ENCODE measurements at regions of chr19 and their contacts with region 1.

Region 1: DNA sequence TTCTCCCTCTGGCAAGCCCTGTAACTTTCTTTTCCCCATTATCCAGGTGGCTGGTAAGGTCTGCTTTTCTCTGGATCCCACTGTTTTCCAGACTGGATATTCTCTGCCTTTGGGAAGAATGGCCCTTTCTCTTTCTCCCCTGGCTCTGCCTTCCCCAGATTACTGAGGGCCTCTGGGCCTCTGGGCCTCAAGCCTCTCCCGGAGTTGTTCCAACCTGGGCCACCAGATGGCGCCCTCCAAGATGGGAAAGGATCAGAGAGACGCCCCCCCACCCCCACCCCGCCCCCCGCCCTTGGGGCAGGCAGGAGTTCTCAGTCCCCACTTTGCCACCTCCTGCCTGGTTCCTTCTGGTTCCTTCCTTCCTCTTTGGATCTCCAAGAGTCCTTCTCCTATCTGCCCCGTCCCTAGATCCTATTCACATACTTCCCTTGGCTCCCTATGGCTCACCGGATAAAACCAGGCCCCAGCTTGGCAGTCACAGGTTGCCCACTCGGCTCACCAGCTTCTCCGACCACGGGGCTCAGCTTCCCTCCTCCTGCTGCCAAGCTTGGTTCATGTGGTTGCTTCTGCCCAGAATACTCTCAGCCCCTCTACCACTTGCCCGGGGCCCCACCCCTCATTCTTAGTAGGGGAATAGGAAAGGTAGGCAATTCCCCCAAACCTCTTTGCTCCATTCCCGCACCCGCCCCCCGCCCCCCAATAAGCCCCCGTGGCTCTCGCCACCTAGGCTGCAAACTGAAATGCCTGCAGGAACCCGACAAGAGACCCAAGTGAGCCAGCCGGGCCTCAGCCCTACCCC is 13.1 kb downstream of the EPS8L1 start:
- DNase-seq: peak; percentile 61
- H3K4me3 Mint-ChIP-seq: no peak overlapping the region
- H3K27ac Mint-ChIP-seq: no peak overlapping the region
- H3K4me1 Mint-ChIP-seq: peaks cover 11% of the 10 kb centered on the region
- H3K27me3 Mint-ChIP-seq: peaks cover 33% of the 10 kb centered on the region

Region 2: DNA sequence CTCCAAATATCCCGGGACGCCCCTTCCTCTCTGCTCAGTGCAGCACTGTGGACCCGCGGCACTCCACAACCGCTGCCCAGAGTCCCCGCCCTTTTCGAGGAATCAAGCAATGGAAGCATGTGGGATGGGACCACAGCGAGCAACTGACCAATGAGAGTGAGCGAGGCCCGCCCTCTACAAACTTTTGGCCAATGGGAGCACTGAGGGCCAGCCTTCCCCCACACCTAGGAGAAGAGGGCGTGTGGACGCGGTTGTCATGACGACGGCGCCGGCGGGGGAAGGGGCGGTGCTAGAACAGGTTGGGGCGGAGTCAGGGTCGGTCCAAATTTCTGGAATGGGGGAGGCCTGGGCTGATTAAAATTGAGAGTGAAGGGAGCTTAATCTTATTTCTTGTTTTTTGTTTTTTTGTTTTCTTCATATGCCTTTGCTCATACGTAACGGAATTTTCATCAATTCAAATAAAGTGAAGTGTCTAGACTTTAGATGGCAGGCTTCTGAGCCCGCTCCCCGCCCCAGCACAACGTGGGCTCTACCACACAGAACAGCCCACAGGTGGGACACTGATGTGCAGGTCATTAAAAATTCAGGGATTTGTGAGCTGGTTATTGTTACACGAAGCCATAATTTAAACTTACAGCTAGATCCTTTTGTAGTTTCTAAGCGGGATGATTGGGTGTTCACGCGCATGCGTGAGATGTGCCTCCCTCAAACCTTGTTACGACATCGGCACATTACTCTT is 78.0 kb after region 1 on chr19 and contains the start of gene DNAAF3:
- intact Hi-C with region 1: loop called (anchors 10 kb)
- DNase-seq: peak; percentile 75
- H3K4me3 Mint-ChIP-seq: peak within 1 kb of the TSS; percentile 81
- H3K27ac Mint-ChIP-seq: no peak within 1 kb of the TSS
- H3K4me1 Mint-ChIP-seq: peaks cover 10% of the 10 kb centered on the region
- H3K27me3 Mint-ChIP-seq: peaks cover 47% of the 10 kb centered on the region
- total RNA-seq, gene DNAAF3: 0.23 and 0.27 TPM in 2 replicates